WTC11 (cell line): ENCODE measurements at regions of chr4 and their contacts with region 1.

Region 1: DNA sequence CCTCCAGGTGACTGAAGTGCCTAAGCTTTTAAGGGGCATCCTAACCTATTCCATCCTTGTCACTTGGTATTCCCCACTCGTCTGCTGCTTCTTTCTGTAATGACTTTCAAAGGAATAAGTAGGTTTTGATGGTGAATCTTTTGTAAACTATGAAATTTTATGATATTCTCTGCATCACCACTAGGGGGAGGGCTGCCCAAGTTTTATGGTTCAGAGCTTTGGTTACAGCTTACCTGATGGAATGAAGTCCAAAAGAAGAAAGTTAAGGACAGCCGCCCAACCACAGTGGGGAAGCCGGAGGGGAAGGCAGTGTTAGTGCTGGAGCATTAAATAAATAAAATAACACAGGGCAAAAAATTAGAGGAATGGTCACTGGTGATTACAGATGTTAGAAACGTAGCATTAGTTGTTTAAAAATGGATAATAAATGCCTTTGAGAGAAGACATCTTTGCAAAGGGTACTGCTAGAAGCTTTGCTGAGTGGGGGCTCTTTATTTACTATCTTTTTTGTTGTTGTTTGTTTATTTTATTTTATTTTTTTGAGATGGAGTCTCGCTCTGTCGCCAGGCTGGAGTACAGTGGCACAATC is 204.9 kb downstream of the GBA3 start:
- DNase-seq: peak; percentile 55
- ATAC-seq: peak; percentile 79
- H3K4me3 Mint-ChIP-seq: no peak overlapping the region
- H3K27ac Mint-ChIP-seq: no peak overlapping the region
- H3K4me1 Mint-ChIP-seq: no peaks in the 10 kb centered on the region; the same call in 1 of the 2 replicates
- H3K27me3 Mint-ChIP-seq: no peaks in the 10 kb centered on the region
- CTCF ChIP-seq: peak; percentile 75

Region 2: GRCh38 chr4:22859318-22859717 is 38.3 kb before region 1 on chr4:
- CTCF ChIA-PET with region 1: no interaction called
- POLR2A ChIA-PET with region 1: no interaction called
- DNase-seq: no peak
- ATAC-seq: no peak
- H3K4me3 Mint-ChIP-seq: no peak overlapping the region
- H3K27ac Mint-ChIP-seq: no peak overlapping the region
- H3K4me1 Mint-ChIP-seq: no peaks in the 10 kb centered on the region
- H3K27me3 Mint-ChIP-seq: no peaks in the 10 kb centered on the region
- CTCF ChIP-seq: no peak

Region 3: DNA sequence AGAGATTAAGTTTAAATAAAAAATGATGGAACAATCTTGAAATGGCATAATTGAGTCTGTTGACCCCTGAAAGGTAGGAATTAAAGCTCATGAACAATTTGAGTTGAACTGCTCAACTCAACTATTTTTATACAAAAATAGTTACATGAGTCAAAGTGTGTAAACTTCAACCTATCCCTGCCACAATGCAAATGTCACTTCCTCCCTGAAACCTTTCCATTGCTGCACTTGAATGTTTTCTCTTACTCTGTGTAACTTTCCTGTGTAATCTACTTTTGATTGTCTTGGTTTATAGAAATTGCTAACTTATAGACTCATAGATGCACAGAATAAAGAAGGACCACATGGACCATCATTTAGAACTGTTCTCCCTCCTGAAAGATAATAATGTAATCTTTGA is 13.7 kb after region 1 on chr4:
- CTCF ChIA-PET with region 1: interaction called, 11 read pairs
- POLR2A ChIA-PET with region 1: no interaction called
- DNase-seq: no peak
- ATAC-seq: no peak
- H3K4me3 Mint-ChIP-seq: no peak overlapping the region
- H3K27ac Mint-ChIP-seq: no peak overlapping the region
- H3K4me1 Mint-ChIP-seq: peaks cover 9% of the 10 kb centered on the region
- H3K27me3 Mint-ChIP-seq: no peaks in the 10 kb centered on the region; the same call in 1 of the 2 replicates
- CTCF ChIP-seq: no peak